CD4-positive, alpha-beta T cell (primary cell): ENCODE measurements at regions of chr14 and their contacts with region 1.

Region 1: DNA sequence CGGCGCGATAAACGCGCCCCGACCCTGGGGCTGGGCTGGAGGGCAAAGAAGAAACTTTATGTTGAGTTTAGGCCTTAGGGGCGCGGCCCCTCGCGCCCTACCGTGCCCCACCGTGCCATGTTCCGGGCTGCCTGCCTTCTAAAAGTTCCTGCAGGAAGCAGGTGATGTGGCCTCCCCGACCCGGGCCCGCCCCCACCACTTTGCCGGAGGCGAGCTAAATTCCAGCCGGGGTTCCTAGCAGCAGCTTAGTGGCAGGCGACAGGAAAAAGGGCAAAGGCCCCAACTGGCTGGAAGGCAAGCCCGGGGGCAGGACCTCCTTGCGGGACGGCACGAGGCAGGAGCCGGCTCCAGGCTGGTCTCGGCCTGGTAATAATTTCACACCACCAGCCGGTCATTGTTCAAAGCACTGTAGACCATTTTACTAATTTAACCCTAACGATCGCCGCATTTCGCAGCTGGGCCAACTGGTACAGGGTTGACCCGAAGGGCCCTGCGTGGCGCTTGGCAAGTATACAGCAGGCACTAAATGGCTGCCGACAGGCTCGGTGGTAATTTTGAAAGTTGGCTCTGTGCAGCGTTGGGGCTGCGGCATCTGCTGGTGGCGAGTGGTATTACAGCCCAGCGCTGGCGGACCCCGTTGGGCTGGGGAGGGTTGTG is 895 bp upstream of the CCDC88C start:
- DNase-seq: peak; percentile 67 to 91 (median 80)
- ATAC-seq: peak; percentile 28
- H3K4me3 ChIP-seq: peak overlapping the region; percentile 56
- H3K4me3 Mint-ChIP-seq: peak overlapping the region; percentile 86
- H3K27ac ChIP-seq: peak overlapping the region; percentile 52 to 78
- H3K27ac Mint-ChIP-seq: peak overlapping the region; percentile 86
- H3K4me1 ChIP-seq: peaks cover 35% of the 10 kb centered on the region
- H3K4me1 Mint-ChIP-seq: peaks cover 46% of the 10 kb centered on the region
- H3K27me3 ChIP-seq: no peaks in the 10 kb centered on the region
- H3K27me3 Mint-ChIP-seq: no peaks in the 10 kb centered on the region
- CTCF ChIP-seq: peak; percentile 97

Region 2: GRCh38 chr14:91060351-91061055 is 358.0 kb before region 1 on chr14 and contains the start of gene RPS6KA5:
- CTCF ChIA-PET with region 1: no interaction called
- POLR2A ChIA-PET with region 1: interaction called, 10 read pairs
- intact Hi-C with region 1: loop called in 1 of 2 experiments (anchors 5 kb)
- DNase-seq: peak; percentile 99 to 100 (median 100)
- ATAC-seq: peak; percentile 81
- H3K4me3 ChIP-seq: peak within 1 kb of the TSS; percentile 81
- H3K4me3 Mint-ChIP-seq: peak within 1 kb of the TSS; percentile 88
- H3K27ac ChIP-seq: peak within 1 kb of the TSS; percentile 80 to 91
- H3K27ac Mint-ChIP-seq: peak within 1 kb of the TSS; percentile 81
- H3K4me1 ChIP-seq: peaks cover 51% of the 10 kb centered on the region
- H3K4me1 Mint-ChIP-seq: peaks cover 64% of the 10 kb centered on the region
- H3K27me3 ChIP-seq: no peaks in the 10 kb centered on the region
- H3K27me3 Mint-ChIP-seq: no peaks in the 10 kb centered on the region
- CTCF ChIP-seq: no peak
- total RNA-seq, gene RPS6KA5: 28.0 to 29.8 TPM

Region 3: DNA sequence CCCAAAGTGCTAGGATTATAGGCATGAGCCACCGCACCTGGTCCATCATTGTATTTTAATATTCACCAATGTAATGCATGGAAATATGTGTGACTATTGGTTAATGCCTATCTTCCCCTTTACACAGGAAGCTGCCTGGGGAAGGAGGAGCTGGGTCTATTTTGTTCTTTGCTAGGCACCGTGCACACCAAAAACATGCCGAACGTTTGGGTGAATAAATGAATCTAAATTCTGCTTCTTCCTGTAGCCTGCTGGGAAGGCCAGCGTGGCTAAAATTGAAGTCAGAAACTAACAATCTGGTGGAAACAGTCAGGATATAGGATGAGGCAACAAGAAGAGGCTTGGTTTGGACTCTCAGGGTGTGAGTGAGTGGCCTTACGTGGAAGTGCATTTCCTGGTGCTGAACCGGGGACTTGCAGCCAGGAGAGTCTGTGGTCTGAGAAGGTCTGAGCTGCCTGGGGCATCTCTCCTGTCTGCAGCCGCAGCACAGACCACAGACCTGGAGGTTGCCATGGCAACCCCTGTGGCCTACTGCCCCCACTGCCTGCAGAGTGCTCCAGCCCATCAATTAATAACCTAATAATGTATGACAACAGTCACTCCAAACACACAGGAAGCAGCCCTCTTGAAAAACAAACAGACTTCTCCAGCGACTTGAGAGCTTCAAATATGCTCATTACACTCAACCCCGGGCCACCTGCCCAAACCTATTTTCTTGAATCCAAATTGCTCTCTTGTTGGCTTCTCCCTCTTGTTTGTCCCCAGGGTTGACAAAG is 168.5 kb before region 1 on chr14:
- CTCF ChIA-PET with region 1: no interaction called
- POLR2A ChIA-PET with region 1: interaction called, 9 read pairs
- intact Hi-C with region 1: loop called in 1 of 2 experiments (anchors 5 kb)
- DNase-seq: peak in 7 of 14 experiments; percentile 27 to 81 (median 52)
- ATAC-seq: no peak
- H3K4me3 ChIP-seq: no peak overlapping the region
- H3K4me3 Mint-ChIP-seq: peak overlapping the region; percentile 79
- H3K27ac ChIP-seq: peak overlapping the region; percentile 59 to 68
- H3K27ac Mint-ChIP-seq: peak overlapping the region; percentile 78
- H3K4me1 ChIP-seq: peaks cover 96% of the 10 kb centered on the region
- H3K4me1 Mint-ChIP-seq: peaks cover 87% of the 10 kb centered on the region
- H3K27me3 ChIP-seq: no peaks in the 10 kb centered on the region
- H3K27me3 Mint-ChIP-seq: no peaks in the 10 kb centered on the region
- CTCF ChIP-seq: no peak

Region 4: DNA sequence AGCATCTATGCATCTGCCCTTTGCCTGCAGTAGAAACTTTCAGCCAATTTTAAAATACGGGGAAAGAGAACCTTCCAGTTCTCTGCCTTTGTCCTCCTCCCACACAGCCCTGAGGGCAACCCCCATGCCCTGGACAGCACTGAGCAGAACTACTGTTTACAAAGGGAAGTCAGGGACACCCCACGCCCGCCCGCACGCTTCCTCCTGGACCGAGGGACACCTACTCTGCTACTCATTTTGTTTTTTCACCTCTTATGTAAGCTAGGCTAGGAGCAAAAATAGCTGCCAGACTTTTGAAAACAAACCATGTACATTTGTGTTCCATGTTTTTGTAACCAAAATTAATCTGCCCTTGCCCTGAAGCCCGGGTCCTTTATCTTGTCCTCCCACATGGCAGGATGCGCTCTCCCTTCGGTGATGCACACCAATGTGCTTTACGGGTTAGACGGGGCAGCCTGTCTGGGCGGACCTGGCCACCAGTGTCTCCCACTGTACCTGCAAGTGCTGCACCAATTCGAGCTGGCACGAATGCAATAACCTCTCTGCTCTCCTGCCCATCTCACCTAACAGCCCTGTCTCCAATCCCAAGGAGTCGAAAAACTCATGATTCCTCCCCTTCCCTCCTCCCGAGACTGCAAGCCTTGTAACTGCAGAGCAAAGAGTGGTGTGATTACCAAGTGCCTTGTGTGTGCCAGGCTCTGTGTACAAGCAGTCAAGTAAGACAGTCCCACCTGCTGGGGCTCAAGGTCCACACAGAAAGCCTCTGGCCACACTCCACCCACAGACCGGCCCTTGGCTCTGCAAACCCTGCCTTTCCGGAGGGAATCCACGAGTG is 86.1 kb before region 1 on chr14:
- CTCF ChIA-PET with region 1: interaction called, 53 read pairs
- POLR2A ChIA-PET with region 1: interaction called, 10 read pairs
- intact Hi-C with region 1: no loop called
- DNase-seq: peak in 1 of 14 experiments; percentile 24
- ATAC-seq: no peak
- H3K4me3 ChIP-seq: no peak overlapping the region
- H3K4me3 Mint-ChIP-seq: peak overlapping the region; percentile 42
- H3K27ac ChIP-seq: peak overlapping the region; percentile 32 to 72
- H3K27ac Mint-ChIP-seq: peak overlapping the region; percentile 97
- H3K4me1 ChIP-seq: peaks cover 77% of the 10 kb centered on the region
- H3K4me1 Mint-ChIP-seq: peaks cover 80% of the 10 kb centered on the region
- H3K27me3 ChIP-seq: no peaks in the 10 kb centered on the region
- H3K27me3 Mint-ChIP-seq: no peaks in the 10 kb centered on the region
- CTCF ChIP-seq: no peak

Region 5: DNA sequence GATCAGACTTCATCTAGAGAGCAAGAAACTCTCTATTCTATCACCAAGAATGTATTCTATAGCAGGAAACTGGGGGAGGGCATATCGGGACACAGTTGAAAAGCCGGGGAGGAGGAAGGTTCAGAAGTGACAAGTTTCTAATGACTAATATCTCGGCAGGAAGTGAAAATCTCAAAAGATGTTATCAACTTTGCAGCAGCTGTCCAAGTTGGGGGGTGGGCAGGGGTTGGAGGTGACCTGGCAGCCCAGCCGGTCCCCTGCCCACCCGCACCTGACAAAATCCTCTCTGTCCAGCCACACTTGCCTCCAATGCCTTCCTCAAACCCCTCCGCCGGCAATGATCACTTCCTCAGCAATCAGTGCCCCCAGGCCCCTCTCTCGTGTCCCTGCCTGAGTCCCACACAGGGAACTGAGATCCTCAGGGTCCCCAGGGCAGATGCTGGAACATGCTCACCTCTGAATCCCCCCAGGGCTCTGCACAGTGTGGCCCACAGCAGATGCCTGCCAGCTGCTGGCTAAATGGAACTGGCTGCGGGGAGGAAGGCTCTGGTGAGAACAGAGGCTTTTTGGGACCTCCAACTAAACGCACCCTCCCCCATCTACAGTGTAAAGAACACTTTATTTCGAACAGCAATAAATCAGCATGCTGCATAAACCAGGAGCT is 44.8 kb before region 1 on chr14:
- CTCF ChIA-PET with region 1: interaction called, 9 read pairs
- POLR2A ChIA-PET with region 1: interaction called, 103 read pairs
- intact Hi-C with region 1: loop called in 1 of 2 experiments (anchors 1 kb)
- DNase-seq: peak in 9 of 14 experiments; percentile 47 to 82 (median 61)
- ATAC-seq: peak; percentile 64
- H3K4me3 ChIP-seq: peak overlapping the region; percentile 43
- H3K4me3 Mint-ChIP-seq: peak overlapping the region; percentile 90
- H3K27ac ChIP-seq: peak overlapping the region; percentile 69 to 80
- H3K27ac Mint-ChIP-seq: peak overlapping the region; percentile 96
- H3K4me1 ChIP-seq: peaks cover 100% of the 10 kb centered on the region
- H3K4me1 Mint-ChIP-seq: peaks cover 100% of the 10 kb centered on the region
- H3K27me3 ChIP-seq: no peaks in the 10 kb centered on the region
- H3K27me3 Mint-ChIP-seq: no peaks in the 10 kb centered on the region
- CTCF ChIP-seq: no peak

Region 6: GRCh38 chr14:91872517-91873470 is 454.3 kb after region 1 on chr14:
- CTCF ChIA-PET with region 1: no interaction called
- POLR2A ChIA-PET with region 1: interaction called, 6 read pairs
- intact Hi-C with region 1: loop called in 1 of 2 experiments (anchors 5 kb)
- DNase-seq: peak; percentile 52 to 85 (median 73)
- ATAC-seq: peak; percentile 45
- H3K4me3 ChIP-seq: peak overlapping the region; percentile 53
- H3K4me3 Mint-ChIP-seq: peak overlapping the region; percentile 90
- H3K27ac ChIP-seq: peak overlapping the region; percentile 86 to 97
- H3K27ac Mint-ChIP-seq: peak overlapping the region; percentile 95
- H3K4me1 ChIP-seq: peaks cover 100% of the 10 kb centered on the region
- H3K4me1 Mint-ChIP-seq: peaks cover 95% of the 10 kb centered on the region
- H3K27me3 ChIP-seq: no peaks in the 10 kb centered on the region
- H3K27me3 Mint-ChIP-seq: no peaks in the 10 kb centered on the region
- CTCF ChIP-seq: no peak